Ascending aorta (tissue), 2 donors: ENCODE measurements at regions of chr6 and their contacts with region 1.

Region 1: DNA sequence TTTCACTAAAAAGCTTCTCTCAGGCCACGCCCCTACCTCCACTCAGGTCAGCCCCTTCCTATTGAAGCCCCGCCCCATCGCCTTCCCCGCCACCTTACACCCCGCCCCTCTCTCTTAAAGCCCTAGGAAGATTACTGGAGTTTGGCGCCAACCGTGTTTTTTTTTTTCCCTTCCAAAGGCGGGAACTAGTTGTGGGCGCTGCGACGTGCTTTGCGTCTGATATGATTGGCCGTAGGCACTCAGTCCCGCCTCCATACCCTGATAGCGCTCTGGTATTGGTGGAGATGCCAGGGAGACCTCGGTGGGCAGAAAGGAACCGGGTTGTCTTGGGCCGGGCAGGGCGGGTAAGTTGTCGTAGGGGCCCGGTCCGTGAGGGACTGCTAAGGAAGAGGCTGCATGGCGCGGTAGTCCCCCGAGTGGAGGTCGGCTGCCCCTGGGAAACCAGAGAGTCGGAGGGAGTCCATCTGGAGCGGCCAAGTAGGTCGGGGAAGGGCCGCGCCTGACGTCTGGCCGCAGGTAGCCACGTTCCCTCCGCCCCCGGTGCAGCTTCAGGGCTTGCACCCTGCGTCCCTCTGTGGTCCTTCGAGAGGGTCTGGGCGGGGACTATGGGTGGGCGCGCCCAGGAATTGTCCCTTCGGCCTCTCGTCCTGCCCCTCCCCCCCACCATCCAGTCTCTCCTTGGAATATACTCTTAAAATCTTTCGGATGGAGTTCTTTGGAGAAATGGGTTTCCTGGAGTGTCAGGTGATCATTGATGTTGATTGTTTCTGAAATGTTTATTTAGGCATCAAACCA is at the start of gene CASP8AP2:
- DNase-seq: peak; percentile 90 to 98
- H3K4me3 ChIP-seq: peak within 1 kb of the TSS; percentile 71 to 73
- H3K27ac ChIP-seq: peak within 1 kb of the TSS; percentile 85 to 89
- H3K4me1 ChIP-seq: peaks cover 0 to 11% of the 10 kb centered on the region in 2 donors
- H3K27me3 ChIP-seq: no peaks in the 10 kb centered on the region
- CTCF ChIP-seq: no peak
- total RNA-seq, gene CASP8AP2: 6.7 TPM

Region 2: DNA sequence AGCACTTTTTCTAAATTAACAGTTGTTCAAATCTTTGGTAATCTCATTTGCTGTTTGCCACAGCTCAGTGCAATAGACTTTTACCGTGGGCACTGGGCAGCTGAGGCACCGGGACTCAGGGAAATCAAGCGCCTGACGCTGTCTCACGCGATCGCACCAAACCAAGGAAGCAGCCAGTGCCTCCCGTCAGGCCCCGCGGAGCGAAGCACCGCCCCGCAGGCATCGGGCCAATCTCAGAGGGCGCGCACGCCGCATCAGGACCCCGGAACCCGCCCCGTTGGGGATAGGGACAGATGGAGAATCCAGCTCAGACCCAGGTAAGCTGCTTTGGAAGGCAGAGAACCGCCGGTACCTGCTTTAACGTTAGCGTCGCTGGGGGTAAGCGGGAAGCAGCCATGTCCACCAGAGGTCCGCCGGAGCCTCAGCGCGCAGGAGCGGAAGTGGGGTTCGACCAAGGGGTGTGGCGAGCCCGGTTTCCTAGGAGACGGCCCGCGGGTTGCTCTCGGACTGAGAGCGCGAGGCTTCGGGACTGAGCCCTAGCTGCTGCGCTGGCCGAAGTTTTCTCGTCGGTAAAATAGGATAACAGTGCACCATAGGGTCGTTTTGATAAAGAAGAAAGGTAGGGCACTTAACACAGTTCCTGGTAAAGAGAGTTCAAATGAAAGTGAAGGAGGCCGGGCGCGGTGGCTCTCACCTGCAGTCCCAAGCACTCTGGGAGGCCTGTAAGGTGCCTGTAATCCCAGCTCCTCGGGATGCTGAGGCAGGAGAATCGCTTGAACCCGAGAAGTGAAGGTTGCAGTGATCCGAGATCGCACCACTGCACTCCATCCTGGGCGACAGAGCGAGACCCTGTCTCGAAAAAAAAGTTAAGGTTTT is 191.2 kb before region 1 on chr6 and contains the start of gene LYRM2:
- intact Hi-C with region 1: loop called (anchors 2 kb)
- DNase-seq: peak; percentile 76 to 96
- H3K4me3 ChIP-seq: peak within 1 kb of the TSS; percentile 56 to 72
- H3K27ac ChIP-seq: peak within 1 kb of the TSS; percentile 84 to 89
- H3K4me1 ChIP-seq: peaks cover 6 to 9% of the 10 kb centered on the region in 2 donors
- H3K27me3 ChIP-seq: no peaks in the 10 kb centered on the region
- CTCF ChIP-seq: peak in 1 of 3 experiments; percentile 10
- total RNA-seq, gene LYRM2: 5.6 TPM

Region 3: DNA sequence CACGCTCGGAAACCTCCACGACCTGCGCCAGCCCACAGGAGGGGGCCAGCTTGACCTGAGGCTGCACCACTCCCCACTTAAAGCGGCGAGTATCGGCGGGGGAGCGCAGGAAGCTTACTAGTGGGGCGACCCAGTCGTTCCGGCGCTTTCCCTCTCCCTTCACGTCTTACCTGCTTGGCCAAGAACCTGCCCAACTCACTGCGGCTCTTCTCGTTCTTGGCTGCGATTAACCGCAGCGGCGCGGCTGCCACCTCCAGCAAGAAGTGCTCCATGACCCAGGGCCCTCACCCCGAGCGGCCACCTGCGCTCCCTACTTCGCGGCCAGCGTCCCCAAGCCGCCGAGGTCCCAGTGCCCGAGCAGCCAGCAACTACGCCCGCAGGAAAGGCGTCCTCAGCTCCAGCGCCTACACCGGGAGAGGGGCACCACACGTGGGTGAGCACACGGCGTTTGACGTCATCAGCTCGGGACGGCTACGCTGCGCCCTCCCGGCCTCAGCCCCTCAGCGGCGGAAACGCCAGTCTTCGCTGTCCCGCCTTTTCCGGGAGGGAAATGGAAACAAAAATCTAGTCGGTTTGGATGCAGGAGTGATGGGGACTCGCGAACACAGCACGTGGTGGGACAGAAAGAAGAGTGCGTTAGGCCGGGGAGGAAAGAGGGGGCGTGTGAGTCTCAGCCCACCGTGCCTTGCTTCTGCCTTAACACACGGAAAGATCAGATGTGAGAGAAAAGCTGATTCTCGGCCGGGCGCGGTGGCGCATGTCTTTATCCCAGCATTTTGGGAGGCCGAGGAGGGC is 10.3 kb before region 1 on chr6 and contains the start of gene MDN1:
- intact Hi-C with region 1: loop called (anchors 1 kb)
- DNase-seq: peak; percentile 67 to 93
- H3K4me3 ChIP-seq: peak within 1 kb of the TSS; percentile 80 to 88
- H3K27ac ChIP-seq: peak within 1 kb of the TSS; percentile 82 to 84
- H3K4me1 ChIP-seq: peaks cover 3 to 12% of the 10 kb centered on the region in 2 donors
- H3K27me3 ChIP-seq: no peaks in the 10 kb centered on the region
- CTCF ChIP-seq: peak in 1 of 3 experiments; percentile 6
- total RNA-seq, gene MDN1: 12.2 TPM

Region 4: DNA sequence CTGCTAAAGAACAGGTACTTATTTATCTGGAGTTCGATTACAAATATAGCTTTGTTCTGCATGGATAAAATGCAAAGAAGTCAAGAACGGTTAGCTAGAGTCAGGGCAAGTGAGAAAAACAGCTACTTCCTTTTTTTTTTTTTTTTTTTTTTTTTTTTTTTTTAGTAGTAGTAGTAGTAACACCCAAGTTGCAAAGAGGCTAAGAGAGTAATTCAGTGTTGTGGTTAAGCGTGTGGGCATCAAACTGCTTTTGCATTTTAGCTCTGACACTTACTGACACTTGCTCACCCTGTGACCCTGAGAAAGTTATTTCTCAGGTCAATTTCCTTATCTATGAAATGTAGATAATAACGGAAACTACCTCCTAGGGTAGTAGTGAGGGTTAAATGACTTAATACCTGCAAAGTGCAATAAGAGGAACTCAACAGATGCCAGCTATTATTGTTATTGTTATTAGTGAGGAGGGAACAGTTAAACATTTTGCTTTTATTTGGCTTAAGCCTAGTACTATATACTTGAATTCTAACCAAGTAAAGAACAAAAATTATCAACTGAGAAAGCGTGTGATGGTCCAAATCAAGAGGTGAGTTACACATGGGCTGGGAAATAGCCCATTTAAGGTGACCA is 553.5 kb after region 1 on chr6:
- intact Hi-C with region 1: loop called (anchors 10 kb)
- DNase-seq: no peak
- H3K4me3 ChIP-seq: no peak overlapping the region
- H3K27ac ChIP-seq: no peak overlapping the region
- H3K4me1 ChIP-seq: peaks cover 0 to 9% of the 10 kb centered on the region in 2 donors
- H3K27me3 ChIP-seq: no peaks in the 10 kb centered on the region
- CTCF ChIP-seq: no peak